OCI-LY7 (cell line): ENCODE measurements at regions of chr12 and their contacts with region 1.

Region 1: DNA sequence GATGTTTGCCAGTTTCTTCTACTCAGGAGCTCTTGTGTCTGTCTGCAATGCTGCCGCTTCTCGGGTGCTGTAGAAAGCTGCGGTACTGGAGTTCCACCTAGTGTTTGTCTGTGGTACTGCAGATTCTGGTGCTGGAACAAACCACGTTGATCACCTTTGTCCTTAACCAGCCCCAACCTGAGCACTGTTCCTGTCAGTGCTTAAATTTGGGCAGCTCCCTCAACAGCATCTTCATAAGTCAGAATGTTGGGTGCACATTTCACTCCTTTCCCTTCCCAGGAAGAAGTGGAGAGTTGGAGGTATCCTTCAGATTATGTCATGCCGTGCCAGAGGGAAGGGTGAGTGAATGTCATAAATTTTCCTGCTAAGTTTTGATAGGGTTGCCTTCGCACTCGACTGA is 48.7 kb upstream of the LALBA start:
- DNase-seq: peak; percentile 77
- H3K4me3 ChIP-seq: no peak overlapping the region
- H3K27ac ChIP-seq: no peak overlapping the region
- H3K4me1 ChIP-seq: no peaks in the 10 kb centered on the region
- CTCF ChIP-seq: peak; percentile 98

Region 2: DNA sequence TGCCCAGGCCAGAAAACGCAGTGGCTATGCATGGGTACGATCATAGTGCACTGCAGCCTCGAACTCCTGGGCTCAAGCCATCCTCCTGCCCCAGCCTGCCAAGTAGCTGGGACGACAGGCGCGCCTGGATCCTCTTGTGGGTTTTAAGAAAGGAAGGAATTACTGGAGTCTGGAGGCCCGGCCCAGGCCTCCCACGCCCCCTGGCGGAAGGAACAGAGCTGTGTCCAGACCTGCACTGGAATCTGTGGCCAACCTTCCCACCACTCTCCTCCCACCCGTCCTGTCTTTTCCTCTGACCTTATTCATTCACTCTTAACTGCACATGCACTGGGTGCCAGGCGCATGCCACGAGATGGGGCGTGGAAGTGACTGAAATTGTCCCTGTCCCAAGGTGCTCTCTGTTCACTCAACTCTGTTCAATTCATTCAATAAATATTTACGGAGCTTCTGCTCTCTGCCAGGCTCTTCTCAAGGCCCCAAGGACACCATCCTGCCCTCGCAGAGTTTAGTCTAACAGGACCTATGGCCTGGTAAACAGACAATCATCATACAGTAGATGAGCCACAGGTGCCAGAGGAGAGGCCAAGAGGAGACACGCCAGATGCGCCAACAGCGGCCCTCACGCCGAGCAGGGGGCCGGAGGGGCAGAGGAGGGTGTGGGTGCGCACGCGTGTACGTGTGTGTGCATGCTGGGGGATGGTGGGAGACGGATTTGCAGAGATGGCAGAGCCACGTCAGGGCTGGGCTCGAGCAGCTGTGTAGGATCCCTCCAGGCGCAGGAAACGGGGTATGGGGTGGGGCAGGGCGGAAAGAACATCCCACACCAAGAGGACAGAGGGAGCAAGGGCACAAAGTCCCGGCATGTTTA is 668.9 kb before region 1 on chr12:
- CTCF ChIA-PET with region 1: no interaction called
- POLR2A ChIA-PET with region 1: no interaction called
- intact Hi-C with region 1: no loop called
- DNase-seq: peak; percentile 66
- H3K4me3 ChIP-seq: no peak overlapping the region
- H3K27ac ChIP-seq: no peak overlapping the region
- H3K4me1 ChIP-seq: no peaks in the 10 kb centered on the region
- CTCF ChIP-seq: peak; percentile 95

Region 3: GRCh38 chr12:48183091-48183875 is 435.3 kb before region 1 on chr12 and contains the start of gene CCDC184:
- CTCF ChIA-PET with region 1: no interaction called
- POLR2A ChIA-PET with region 1: interaction called, 6 read pairs
- intact Hi-C with region 1: loop called (anchors 5 kb)
- DNase-seq: peak; percentile 85
- H3K4me3 ChIP-seq: peak within 1 kb of the TSS; percentile 78
- H3K27ac ChIP-seq: no peak within 1 kb of the TSS
- H3K4me1 ChIP-seq: peaks cover 8% of the 10 kb centered on the region
- CTCF ChIP-seq: peak; percentile 76
- total RNA-seq, gene CCDC184: not detected in 2 replicates

Region 4: DNA sequence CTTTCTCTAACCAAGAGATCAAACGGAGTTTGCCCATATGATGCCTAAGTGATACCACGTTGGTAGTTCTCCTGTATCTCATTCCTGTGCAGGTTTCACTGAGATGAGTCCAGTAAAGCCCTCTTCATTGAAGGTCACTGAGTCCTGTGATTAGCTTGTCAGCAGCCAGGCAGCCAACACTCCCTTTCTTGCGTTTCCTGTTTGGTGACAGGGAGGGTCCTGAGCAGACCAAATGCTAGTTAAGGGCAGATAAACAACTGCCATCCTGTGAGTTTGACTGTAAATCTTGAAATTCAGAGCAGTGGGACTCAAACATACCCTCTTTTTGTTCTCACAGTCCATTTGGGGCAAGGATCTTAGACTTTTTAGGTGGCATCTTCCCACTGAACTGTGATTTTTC is 307.2 kb before region 1 on chr12:
- CTCF ChIA-PET with region 1: no interaction called
- POLR2A ChIA-PET with region 1: no interaction called
- intact Hi-C with region 1: loop called (anchors 10 kb)
- DNase-seq: no peak
- H3K4me3 ChIP-seq: no peak overlapping the region
- H3K27ac ChIP-seq: no peak overlapping the region
- H3K4me1 ChIP-seq: no peaks in the 10 kb centered on the region
- CTCF ChIP-seq: no peak

Region 5: DNA sequence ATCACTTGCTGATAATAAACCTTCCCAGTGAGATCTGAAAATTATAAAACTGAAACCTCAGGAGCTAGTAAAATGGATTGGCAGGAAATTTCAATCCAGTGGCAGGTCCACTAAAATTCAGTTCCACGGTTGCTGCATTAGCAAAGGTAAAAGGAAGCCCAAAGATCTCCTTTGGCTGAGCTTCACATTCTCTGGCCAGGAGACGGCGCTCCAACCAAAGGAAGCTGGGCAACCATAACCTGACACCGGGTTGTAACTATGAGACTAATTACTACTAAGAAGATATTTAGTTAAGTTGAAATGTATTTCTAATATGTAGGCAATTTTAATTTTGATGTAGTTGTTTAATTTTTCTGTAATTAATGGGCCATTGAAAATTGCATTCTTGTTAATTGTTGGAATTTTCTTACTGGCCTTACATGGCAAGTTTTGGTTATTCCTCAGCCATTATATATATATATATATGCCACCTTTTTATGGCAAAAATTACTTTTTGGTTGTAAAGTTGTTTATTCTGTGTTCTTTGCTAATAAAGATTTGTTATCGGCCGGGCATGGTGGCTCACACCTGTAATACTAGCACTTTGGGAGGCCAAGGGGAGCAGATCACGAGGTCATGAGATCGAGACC is 76.1 kb before region 1 on chr12:
- CTCF ChIA-PET with region 1: no interaction called
- POLR2A ChIA-PET with region 1: no interaction called
- intact Hi-C with region 1: loop called (anchors 2 kb)
- DNase-seq: peak; percentile 20
- H3K4me3 ChIP-seq: no peak overlapping the region
- H3K27ac ChIP-seq: no peak overlapping the region
- H3K4me1 ChIP-seq: no peaks in the 10 kb centered on the region
- CTCF ChIP-seq: peak; percentile 76

Region 6: GRCh38 chr12:48572326-48572725 is 46.2 kb before region 1 on chr12:
- CTCF ChIA-PET with region 1: no interaction called
- POLR2A ChIA-PET with region 1: no interaction called
- intact Hi-C with region 1: no loop called
- DNase-seq: no peak
- H3K4me3 ChIP-seq: no peak overlapping the region
- H3K27ac ChIP-seq: no peak overlapping the region
- H3K4me1 ChIP-seq: no peaks in the 10 kb centered on the region
- CTCF ChIP-seq: no peak

Region 7: GRCh38 chr12:50597200-50598195 is 1979.0 kb after region 1 on chr12:
- CTCF ChIA-PET with region 1: no interaction called
- POLR2A ChIA-PET with region 1: no interaction called
- intact Hi-C with region 1: no loop called
- DNase-seq: peak; percentile 19
- H3K4me3 ChIP-seq: no peak overlapping the region
- H3K27ac ChIP-seq: no peak overlapping the region
- H3K4me1 ChIP-seq: peaks cover 9% of the 10 kb centered on the region
- CTCF ChIP-seq: no peak